Mammary epithelial cell (primary cell): ENCODE measurements at regions of chr19 and their contacts with region 1.

Region 1: DNA sequence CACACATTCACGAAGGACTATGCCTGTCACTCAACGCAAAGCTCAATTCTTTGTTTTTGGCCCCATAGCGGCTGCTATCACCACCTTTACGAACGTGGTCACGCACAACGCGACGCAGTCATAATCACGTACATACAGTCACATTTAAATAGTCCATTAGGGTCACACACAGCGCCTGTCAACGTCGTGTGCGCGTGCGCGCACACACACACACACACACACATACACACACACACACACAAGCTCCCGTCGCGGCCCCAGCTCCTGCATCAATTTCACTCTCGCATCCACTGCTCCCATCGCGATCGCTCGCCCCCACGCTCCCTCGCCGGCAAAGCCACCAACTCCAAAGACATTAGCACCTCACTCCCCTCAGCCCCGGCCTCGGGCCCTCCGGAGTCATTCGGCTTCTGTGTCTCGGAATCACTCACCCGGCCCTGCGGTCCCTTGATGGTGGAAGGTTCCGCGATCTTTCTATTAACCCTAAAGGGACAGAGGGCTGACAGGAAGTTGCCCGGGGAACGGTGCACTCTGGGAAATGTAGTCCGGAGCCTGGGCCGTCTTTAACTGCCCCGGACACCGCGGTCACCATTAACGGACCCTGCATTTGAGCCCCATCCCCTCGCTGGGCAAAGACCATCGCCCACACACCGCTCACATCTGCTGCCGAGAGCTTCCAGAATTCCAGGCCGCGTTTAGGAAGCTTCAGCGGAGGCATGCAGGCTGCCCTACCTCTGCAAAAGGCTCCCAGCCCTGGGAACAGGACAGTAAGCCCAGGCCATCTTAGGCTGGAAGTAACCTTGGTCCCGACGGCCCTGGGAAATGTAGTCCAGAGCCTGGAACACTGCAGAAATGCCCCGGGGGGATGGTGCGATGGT is at the start of gene ZNF790:
- DNase-seq: peak; percentile 88
- H3K4me3 ChIP-seq: peak within 1 kb of the TSS; percentile 54 to 64 (median 57)
- H3K27ac ChIP-seq: peak within 1 kb of the TSS; percentile 14
- H3K4me1 ChIP-seq: peaks cover 6% of the 10 kb centered on the region
- H3K27me3 ChIP-seq: no peaks in the 10 kb centered on the region
- CTCF ChIP-seq: no peak
- total RNA-seq, gene ZNF790: 7.5 to 8.6 TPM

Region 2: DNA sequence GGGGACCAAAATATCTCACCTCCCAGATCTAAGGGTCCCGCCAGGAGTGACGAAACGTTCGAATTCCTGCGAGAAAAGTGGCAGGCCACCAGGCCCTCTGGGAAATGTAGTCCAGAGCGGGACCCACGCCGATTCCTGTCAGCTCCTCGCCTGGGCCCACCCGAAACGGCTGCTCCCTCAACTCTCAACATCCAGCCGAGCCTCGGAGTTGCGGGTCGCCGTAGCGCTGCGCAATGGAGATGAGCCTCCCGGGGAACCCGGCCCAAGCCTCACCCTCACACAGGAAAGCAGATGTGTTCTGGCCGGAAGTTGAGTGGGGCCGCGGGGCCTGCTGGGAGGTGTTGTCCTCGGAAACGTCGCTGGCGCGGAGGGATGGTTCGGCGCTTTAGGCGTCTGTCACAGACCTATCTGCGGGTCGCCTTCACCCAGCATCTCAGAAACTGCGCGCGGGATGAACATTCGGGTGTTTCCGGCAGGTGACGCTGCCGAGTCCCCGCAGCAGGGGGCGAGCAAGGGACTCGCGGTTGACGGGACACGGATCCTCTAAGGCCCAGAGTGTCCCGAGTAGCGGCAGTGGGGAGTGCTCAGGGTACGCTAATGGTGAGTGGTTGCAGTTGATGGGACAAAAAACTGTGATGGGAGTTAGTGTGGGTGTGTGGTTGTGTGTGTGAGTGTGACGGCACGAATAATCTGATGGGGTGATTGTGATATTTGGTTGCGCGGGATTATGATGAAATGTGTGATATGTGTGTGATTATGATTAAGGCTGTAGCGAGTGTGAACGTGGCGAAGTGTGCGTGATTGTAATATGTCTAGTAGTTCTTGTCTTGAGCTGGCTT is 78.1 kb after region 1 on chr19 and contains the starts of genes ZNF568 and ZNF829:
- CTCF ChIA-PET with region 1: no interaction called
- dilution Hi-C with region 1: no loop called
- in situ Hi-C with region 1: no loop called
- intact Hi-C with region 1: loop called (anchors 5 kb)
- DNase-seq: peak; percentile 89
- H3K4me3 ChIP-seq: peak within 1 kb of the TSS; percentile 44 to 81 (median 75)
- H3K27ac ChIP-seq: peak within 1 kb of the TSS; percentile 64
- H3K4me1 ChIP-seq: no peaks in the 10 kb centered on the region
- H3K27me3 ChIP-seq: no peaks in the 10 kb centered on the region
- CTCF ChIP-seq: peak; percentile 31 to 73
- total RNA-seq, gene ZNF568: 9.4 to 15.7 TPM
- total RNA-seq, gene ZNF829: 5.1 to 6.0 TPM